ENCODE measurements at regions of chr3 and their contacts with region 1.

Region 1: DNA sequence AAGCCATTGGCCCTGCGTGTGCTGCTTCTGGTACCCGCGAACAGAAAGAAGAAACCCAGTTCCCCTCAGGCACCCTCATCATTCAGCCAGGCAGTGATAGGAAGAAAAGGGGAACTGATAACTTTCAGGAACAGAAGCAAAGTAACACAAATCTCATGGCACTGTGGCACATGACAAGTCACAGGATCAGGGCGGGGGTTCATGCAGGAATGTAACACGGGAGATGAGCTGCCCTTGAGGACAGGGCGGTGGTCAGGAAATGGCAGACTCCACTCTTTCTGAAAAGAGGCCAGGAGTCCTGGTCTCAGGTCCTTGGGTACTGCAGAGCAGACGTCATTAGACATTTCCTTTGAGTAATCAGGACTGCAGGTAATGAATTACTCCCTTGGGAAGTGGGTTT is 95.5 kb downstream of the CCNL1 start:
- DNase-seq: peak in 1 of 3 donors; percentile 39
- ATAC-seq: peak in 1 of 2 donors; percentile 38
- H3K4me3 ChIP-seq: no peak overlapping the region
- H3K27ac ChIP-seq: no peak overlapping the region
- H3K4me1 ChIP-seq: no peaks in the 10 kb centered on the region
- H3K27me3 ChIP-seq: no peaks in the 10 kb centered on the region

Region 2: DNA sequence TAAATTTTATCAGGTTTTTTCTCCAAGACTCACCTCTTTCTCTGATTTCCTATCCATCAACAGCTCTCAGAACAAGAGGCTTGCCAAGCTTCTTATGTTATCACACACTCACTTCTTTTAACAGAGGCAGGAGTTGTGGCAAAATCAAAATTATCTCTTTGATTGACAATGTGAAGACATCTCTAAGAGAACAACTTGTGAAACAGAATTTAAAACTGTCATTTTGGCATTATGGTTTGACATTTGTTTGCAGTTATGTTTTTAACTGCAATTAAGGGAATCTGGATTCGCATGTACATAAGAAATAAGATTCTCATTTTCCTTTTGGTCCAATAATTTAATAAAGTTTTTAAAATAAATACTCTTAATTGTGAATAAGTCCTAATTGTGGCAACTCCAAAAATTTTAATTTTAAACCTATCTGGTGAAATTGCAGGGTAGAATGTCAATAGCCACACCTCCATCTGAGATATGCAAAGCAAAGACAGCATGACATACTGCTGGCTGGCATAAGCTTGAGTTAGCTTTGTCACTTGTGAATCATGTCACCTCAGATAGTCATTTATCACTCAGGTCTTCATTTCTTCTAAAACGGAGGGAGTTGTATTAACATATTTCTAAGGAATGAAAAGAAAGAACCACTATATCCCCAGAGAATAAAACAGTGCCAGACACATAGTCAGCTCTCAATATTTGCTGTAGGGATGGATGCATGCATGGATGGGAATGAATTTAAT is 63.0 kb before region 1 on chr3:
- intact Hi-C with region 1: loop called in 1 of 4 experiments (anchors 10 kb)
- DNase-seq: no peak
- ATAC-seq: no peak
- H3K4me3 ChIP-seq: no peak overlapping the region
- H3K27ac ChIP-seq: no peak overlapping the region
- H3K4me1 ChIP-seq: no peaks in the 10 kb centered on the region
- H3K27me3 ChIP-seq: no peaks in the 10 kb centered on the region